Activated CD8-positive, alpha-beta memory T cell treated with anti-CD3 and anti-CD28 coated beads, Interleukin-2, amount 10 ng/mL, durations not matched to agents 7 days and 5 days (primary cell): ENCODE measurements at regions of chr15 and their contacts with region 1.

Region 1: GRCh38 chr15:60507596-60508424 is 28.9 kb upstream of the ICE2 start:
- DNase-seq: peak; percentile 74
- ATAC-seq: peak; percentile 86
- H3K4me3 Mint-ChIP-seq: peak overlapping the region; percentile 48
- H3K27ac Mint-ChIP-seq: peak overlapping the region; percentile 82
- H3K4me1 Mint-ChIP-seq: peaks cover 56% of the 10 kb centered on the region
- H3K27me3 Mint-ChIP-seq: no peaks in the 10 kb centered on the region

Region 2: GRCh38 chr15:60035344-60035743 is 472.5 kb before region 1 on chr15:
- CTCF ChIA-PET with region 1: no interaction called
- DNase-seq: no peak
- ATAC-seq: no peak
- H3K4me3 Mint-ChIP-seq: no peak overlapping the region
- H3K27ac Mint-ChIP-seq: no peak overlapping the region
- H3K4me1 Mint-ChIP-seq: peaks cover 19% of the 10 kb centered on the region
- H3K27me3 Mint-ChIP-seq: peaks cover 2% of the 10 kb centered on the region

Region 3: GRCh38 chr15:60340207-60340921 is 167.4 kb before region 1 on chr15:
- CTCF ChIA-PET with region 1: no interaction called
- DNase-seq: no peak
- ATAC-seq: no peak
- H3K4me3 Mint-ChIP-seq: no peak overlapping the region
- H3K27ac Mint-ChIP-seq: no peak overlapping the region
- H3K4me1 Mint-ChIP-seq: no peaks in the 10 kb centered on the region
- H3K27me3 Mint-ChIP-seq: no peaks in the 10 kb centered on the region

Region 4: DNA sequence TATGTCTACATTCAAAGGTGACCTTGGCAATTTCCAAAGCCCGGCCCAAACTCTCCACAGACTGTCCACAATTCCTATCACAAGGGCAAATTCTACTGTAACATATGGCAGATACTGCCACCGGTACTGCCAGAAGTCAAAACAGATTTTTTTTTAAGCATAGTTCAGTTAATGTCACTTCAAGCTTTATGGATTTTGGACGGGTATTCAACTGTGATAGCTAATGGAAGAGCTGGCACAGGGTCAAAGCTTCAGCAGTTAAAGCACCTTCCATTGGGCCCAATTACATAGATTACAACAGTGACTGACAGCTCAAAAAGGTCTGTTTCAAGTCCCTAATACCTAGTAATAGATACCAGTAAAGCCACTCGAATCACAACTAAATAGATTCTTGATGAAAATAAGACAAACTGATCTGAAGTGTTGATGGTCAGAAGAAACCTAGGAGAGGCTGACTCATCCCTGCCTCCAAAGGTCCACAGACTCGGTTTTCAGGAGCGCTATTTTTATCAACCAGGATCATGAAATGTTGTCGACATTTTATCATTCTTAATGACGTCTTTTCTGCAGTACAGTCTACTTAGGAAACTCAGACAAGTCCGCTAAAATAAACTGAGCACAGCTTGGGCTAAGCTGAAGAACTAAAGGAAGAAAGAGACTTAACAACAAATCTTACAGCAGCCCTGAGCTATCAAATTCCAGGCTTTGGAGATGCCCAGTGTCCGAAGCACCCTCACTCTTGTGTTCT is 148.7 kb before region 1 on chr15:
- CTCF ChIA-PET with region 1: interaction called, 14 read pairs
- DNase-seq: no peak
- ATAC-seq: no peak
- H3K4me3 Mint-ChIP-seq: no peak overlapping the region
- H3K27ac Mint-ChIP-seq: no peak overlapping the region
- H3K4me1 Mint-ChIP-seq: peaks cover 26% of the 10 kb centered on the region
- H3K27me3 Mint-ChIP-seq: no peaks in the 10 kb centered on the region

Region 5: DNA sequence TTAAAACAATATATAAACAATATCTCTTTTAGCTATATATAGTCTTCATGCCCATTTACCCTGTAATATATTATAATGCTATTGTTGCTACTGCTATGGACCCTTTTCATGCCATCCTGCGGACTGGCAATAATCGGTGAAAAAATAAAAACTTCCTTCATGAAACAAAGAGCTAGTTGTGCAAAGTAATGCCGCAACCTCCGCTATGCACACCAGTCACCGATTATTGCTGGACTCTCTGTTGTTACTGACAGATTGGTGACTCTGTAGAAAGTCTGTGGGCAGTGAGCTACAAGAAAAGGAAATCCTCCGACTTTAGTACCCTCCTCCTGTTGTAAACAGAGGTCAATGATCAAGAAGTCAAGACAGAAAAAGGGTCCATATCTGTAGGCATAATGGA is 11.0 kb before region 1 on chr15:
- CTCF ChIA-PET with region 1: interaction called, 11 read pairs
- DNase-seq: no peak
- ATAC-seq: no peak
- H3K4me3 Mint-ChIP-seq: no peak overlapping the region
- H3K27ac Mint-ChIP-seq: no peak overlapping the region
- H3K4me1 Mint-ChIP-seq: peaks cover 16% of the 10 kb centered on the region
- H3K27me3 Mint-ChIP-seq: no peaks in the 10 kb centered on the region

Region 6: GRCh38 chr15:60553163-60553562 is 45.4 kb after region 1 on chr15:
- CTCF ChIA-PET with region 1: interaction called, 10 read pairs
- DNase-seq: no peak
- ATAC-seq: no peak
- H3K4me3 Mint-ChIP-seq: no peak overlapping the region
- H3K27ac Mint-ChIP-seq: peak overlapping the region; percentile 17
- H3K4me1 Mint-ChIP-seq: peaks cover 96% of the 10 kb centered on the region
- H3K27me3 Mint-ChIP-seq: no peaks in the 10 kb centered on the region

Region 7: DNA sequence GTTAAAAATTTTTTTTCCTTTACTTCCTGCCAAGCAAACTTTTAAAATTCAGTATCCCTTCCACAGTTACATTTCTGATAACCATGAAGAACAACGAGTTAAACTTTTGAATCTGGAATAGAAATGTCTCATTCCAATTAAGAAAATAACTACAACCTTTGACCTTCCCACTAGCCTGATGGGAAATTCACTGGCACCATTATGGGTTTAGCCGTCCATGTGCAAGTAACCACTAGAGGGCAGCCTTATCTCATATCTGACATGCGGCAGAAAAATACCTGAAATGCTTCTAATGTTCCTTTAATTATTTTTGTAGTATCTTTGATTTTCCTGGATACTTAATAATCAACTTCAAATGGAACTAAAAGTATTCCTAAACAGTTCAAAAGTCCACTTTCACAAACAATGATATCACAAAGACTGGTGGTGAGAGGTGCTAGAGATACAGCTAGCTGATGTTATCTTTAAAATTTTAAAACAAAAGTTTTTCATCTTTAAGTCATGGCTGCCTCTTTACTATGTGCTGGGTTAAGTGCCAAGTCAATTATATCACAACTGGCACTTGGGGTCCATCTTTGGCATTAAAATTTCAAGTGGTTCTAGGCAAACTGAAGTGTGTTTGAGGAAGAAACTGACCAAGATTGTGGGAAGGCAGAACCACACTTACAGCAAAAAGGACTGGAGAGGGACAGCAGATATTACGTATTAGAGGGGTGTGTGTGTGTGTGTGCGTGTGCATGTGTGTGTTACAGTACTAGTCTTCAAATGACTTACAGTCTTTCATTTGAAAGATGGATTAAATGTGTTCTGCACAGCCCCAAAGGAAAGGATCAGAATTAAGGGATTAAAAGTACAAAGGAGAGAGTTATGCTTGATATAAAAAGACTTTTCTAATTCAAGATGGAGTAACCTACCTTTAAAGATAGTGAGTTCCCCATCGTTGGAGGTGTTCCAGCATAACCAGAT is 78.2 kb after region 1 on chr15:
- CTCF ChIA-PET with region 1: interaction called, 11 read pairs
- DNase-seq: peak; percentile 79
- ATAC-seq: peak; percentile 22
- H3K4me3 Mint-ChIP-seq: peak overlapping the region; percentile 57
- H3K27ac Mint-ChIP-seq: peak overlapping the region; percentile 89
- H3K4me1 Mint-ChIP-seq: peaks cover 84% of the 10 kb centered on the region
- H3K27me3 Mint-ChIP-seq: peaks cover 2% of the 10 kb centered on the region

Region 8: GRCh38 chr15:60932051-60932915 is 424.5 kb after region 1 on chr15:
- CTCF ChIA-PET with region 1: interaction called, 11 read pairs
- DNase-seq: peak; percentile 75
- ATAC-seq: peak; percentile 93
- H3K4me3 Mint-ChIP-seq: no peak overlapping the region
- H3K27ac Mint-ChIP-seq: no peak overlapping the region
- H3K4me1 Mint-ChIP-seq: peaks cover 14% of the 10 kb centered on the region
- H3K27me3 Mint-ChIP-seq: peaks cover 42% of the 10 kb centered on the region